ENCODE measurements at regions of chr22 and their contacts with region 1.

Region 1: DNA sequence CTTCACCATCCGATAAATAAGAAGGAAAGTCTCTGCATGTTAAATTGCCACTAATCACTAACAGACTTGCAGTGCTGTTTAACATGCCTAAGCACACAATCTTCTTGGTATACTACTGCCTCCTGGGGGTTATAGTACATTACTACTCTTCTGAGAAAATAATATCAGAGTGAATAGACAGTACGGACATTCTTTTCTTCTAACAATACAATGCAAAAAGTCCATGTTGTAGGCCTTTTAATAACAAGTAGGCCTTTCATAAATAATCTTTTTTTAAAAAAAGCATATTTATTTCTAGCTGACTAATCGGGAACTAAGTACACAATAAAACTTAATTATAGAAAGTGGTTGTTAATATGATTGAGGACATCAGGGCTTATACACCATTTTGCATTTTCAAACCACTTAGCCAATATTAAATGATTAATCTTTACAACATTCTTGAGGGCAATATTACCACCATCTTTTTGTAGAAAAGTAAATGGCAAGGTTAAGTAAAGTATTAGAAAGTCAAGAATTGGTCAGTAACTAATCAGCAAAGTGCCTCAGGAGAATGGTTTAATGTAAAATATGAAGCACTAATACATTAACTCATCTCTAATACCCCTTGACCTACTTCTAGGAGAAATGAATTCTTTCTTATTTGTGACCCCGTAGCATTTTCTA is 84.7 kb downstream of the TTC28 start:
- DNase-seq: peak; percentile 77
- ATAC-seq: peak; percentile 95
- H3K4me3 ChIP-seq: no peak overlapping the region
- H3K27ac ChIP-seq: no peak overlapping the region
- H3K4me1 ChIP-seq: peaks cover 6% of the 10 kb centered on the region; the same call in 1 of the 2 replicates
- H3K27me3 ChIP-seq: no peaks in the 10 kb centered on the region
- CTCF ChIP-seq: peak; percentile 82
- POLR2A ChIP-seq: no peak
- RAD21 ChIP-seq: peak; percentile 93

Region 2: GRCh38 chr22:27880778-27881394 is 714.0 kb before region 1 on chr22:
- CTCF ChIA-PET with region 1: no interaction called
- POLR2A ChIA-PET with region 1: no interaction called
- dilution Hi-C with region 1: no loop called
- in situ Hi-C with region 1: no loop called
- intact Hi-C with region 1: loop called (anchors 5 kb)
- DNase-seq: peak; percentile 86
- ATAC-seq: peak; percentile 68
- H3K4me3 ChIP-seq: no peak overlapping the region
- H3K27ac ChIP-seq: peak overlapping the region; percentile 67; the same call in 1 of the 2 replicates
- H3K4me1 ChIP-seq: peaks cover 31% of the 10 kb centered on the region
- H3K27me3 ChIP-seq: no peaks in the 10 kb centered on the region
- CTCF ChIP-seq: peak; percentile 84
- POLR2A ChIP-seq: peak; percentile 46; the same call in 1 of the 2 replicates
- RAD21 ChIP-seq: peak; percentile 90

Region 3: GRCh38 chr22:28019881-28020871 is 574.8 kb before region 1 on chr22:
- CTCF ChIA-PET with region 1: interaction called, 9 read pairs
- POLR2A ChIA-PET with region 1: no interaction called
- dilution Hi-C with region 1: no loop called
- in situ Hi-C with region 1: loop called (anchors 10 kb)
- intact Hi-C with region 1: loop called (anchors 1 kb)
- DNase-seq: peak; percentile 60
- ATAC-seq: peak; percentile 95
- H3K4me3 ChIP-seq: no peak overlapping the region
- H3K27ac ChIP-seq: peak overlapping the region; percentile 21; the same call in 1 of the 2 replicates
- H3K4me1 ChIP-seq: peaks cover 13% of the 10 kb centered on the region
- H3K27me3 ChIP-seq: no peaks in the 10 kb centered on the region
- CTCF ChIP-seq: peak; percentile 89
- POLR2A ChIP-seq: no peak
- RAD21 ChIP-seq: peak; percentile 89

Region 4: GRCh38 chr22:28051787-28052356 is 543.1 kb before region 1 on chr22:
- CTCF ChIA-PET with region 1: interaction called, 10 read pairs
- POLR2A ChIA-PET with region 1: no interaction called
- dilution Hi-C with region 1: no loop called
- in situ Hi-C with region 1: loop called (anchors 5 kb)
- intact Hi-C with region 1: loop called (anchors 1 kb)
- DNase-seq: peak; percentile 61
- ATAC-seq: peak; percentile 79; the same call in 1 of the 2 replicates
- H3K4me3 ChIP-seq: no peak overlapping the region
- H3K27ac ChIP-seq: no peak overlapping the region
- H3K4me1 ChIP-seq: peaks cover 3% of the 10 kb centered on the region; the same call in 1 of the 2 replicates
- H3K27me3 ChIP-seq: no peaks in the 10 kb centered on the region
- CTCF ChIP-seq: peak; percentile 90
- POLR2A ChIP-seq: 0 out of 2 replicates have a peak, but pooled peaks have one; percentile 23
- RAD21 ChIP-seq: peak; percentile 92

Region 5: DNA sequence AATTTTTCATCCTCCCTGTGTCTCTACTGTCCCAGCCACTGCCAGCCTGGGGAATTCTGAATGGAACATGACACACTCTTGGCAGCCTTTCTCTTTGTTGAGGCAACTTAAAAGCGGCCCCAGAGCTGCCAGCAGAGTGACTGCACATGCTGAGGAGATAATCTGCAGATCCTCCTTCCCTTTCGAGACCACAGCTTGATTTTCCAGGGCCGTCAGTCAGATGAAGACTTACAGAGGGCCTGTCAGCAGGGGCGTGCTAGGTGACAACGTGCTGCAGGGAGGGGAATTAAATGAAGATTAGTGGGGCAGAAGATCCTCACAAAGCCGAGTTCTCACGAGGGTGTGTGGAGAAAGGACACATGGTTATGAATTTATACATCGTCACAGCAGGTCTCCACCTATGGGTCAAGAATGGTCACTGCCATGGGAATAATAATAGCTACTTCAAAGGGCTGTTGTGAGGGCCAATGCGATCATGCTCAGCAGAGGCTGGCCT is 482.3 kb before region 1 on chr22:
- CTCF ChIA-PET with region 1: no interaction called
- POLR2A ChIA-PET with region 1: no interaction called
- dilution Hi-C with region 1: no loop called
- in situ Hi-C with region 1: no loop called
- intact Hi-C with region 1: loop called (anchors 10 kb)
- DNase-seq: peak; percentile 43
- ATAC-seq: peak; percentile 32
- H3K4me3 ChIP-seq: no peak overlapping the region
- H3K27ac ChIP-seq: no peak overlapping the region
- H3K4me1 ChIP-seq: peaks cover 20% of the 10 kb centered on the region
- H3K27me3 ChIP-seq: no peaks in the 10 kb centered on the region
- CTCF ChIP-seq: peak; percentile 44
- POLR2A ChIP-seq: no peak
- RAD21 ChIP-seq: 0 out of 2 replicates have a peak, but pooled peaks have one; percentile 20

Region 6: DNA sequence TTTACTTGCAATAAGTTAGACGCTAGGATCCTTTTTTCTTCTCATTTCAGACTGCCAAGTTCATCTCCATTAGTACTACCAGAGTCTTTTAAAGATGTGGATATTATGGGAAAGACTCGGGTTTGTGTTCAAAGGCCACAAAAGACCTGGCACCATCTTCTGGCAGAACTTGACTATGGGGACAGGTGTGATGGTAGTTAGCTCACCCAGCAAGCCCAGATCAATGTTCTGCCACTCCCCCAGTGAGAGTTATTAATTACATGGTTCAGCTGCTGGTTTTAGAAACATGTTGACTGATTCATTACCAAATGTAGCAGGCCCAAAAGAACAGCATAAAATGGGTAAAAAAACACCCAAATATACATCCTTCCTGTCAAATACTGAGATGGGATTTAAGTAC is 342.4 kb before region 1 on chr22:
- CTCF ChIA-PET with region 1: no interaction called
- POLR2A ChIA-PET with region 1: no interaction called
- dilution Hi-C with region 1: no loop called
- in situ Hi-C with region 1: no loop called
- intact Hi-C with region 1: loop called (anchors 10 kb)
- DNase-seq: no peak
- ATAC-seq: no peak
- H3K4me3 ChIP-seq: no peak overlapping the region
- H3K27ac ChIP-seq: no peak overlapping the region
- H3K4me1 ChIP-seq: no peaks in the 10 kb centered on the region; the same call in 1 of the 2 replicates
- H3K27me3 ChIP-seq: no peaks in the 10 kb centered on the region
- CTCF ChIP-seq: no peak
- POLR2A ChIP-seq: no peak
- RAD21 ChIP-seq: no peak

Region 7: GRCh38 chr22:28449041-28449440 is 145.9 kb before region 1 on chr22:
- CTCF ChIA-PET with region 1: no interaction called
- POLR2A ChIA-PET with region 1: no interaction called
- dilution Hi-C with region 1: no loop called
- in situ Hi-C with region 1: no loop called
- intact Hi-C with region 1: no loop called
- DNase-seq: no peak
- ATAC-seq: no peak
- H3K4me3 ChIP-seq: no peak overlapping the region
- H3K27ac ChIP-seq: no peak overlapping the region
- H3K4me1 ChIP-seq: no peaks in the 10 kb centered on the region
- H3K27me3 ChIP-seq: no peaks in the 10 kb centered on the region
- CTCF ChIP-seq: no peak
- POLR2A ChIP-seq: no peak
- RAD21 ChIP-seq: no peak

Region 8: GRCh38 chr22:28647216-28647615 is 52.3 kb after region 1 on chr22:
- CTCF ChIA-PET with region 1: no interaction called
- POLR2A ChIA-PET with region 1: no interaction called
- dilution Hi-C with region 1: no loop called
- in situ Hi-C with region 1: no loop called
- intact Hi-C with region 1: no loop called
- DNase-seq: peak; percentile 51
- ATAC-seq: peak; percentile 92
- H3K4me3 ChIP-seq: no peak overlapping the region
- H3K27ac ChIP-seq: no peak overlapping the region
- H3K4me1 ChIP-seq: no peaks in the 10 kb centered on the region
- H3K27me3 ChIP-seq: no peaks in the 10 kb centered on the region
- CTCF ChIP-seq: no peak
- POLR2A ChIP-seq: no peak
- RAD21 ChIP-seq: no peak